HCT116 (cell line): ENCODE measurements at regions of chr2 and their contacts with region 1.

Region 1: DNA sequence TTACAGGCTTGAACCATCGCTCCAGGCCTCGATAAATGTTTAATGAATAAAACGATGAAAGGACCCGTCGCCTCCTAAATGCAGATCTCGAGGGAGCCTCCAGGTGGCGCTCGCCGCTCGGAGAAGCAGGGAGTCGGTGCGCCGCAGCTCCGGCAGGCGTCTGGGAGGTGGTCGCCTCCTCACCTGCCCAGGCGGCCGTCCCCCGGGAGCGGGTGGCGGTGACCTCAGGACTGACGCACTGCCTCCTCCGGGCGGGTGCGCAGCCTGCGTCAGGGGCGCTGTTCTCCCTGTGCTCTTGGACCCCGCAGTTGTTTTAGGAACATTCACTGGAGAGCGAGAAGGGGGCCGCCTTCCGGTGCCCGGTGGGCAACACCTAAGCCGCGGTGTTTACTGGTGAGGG is 38.6 kb upstream of the POLE4 start:
- DNase-seq: peak; percentile 38
- ATAC-seq: peak; percentile 85
- H3K4me3 ChIP-seq: peak overlapping the region in 1 of 2 experiments; percentile 24; a peak in 2 of 4 replicates
- H3K27ac ChIP-seq: no peak overlapping the region
- H3K4me1 ChIP-seq: peaks cover 0 to 4% of the 10 kb centered on the region in 2 experiments; a peak in 1 of 4 replicates
- H3K27me3 ChIP-seq: no peaks in the 10 kb centered on the region
- CTCF ChIP-seq: peak; percentile 67 to 73 (median 72)
- POLR2A ChIP-seq: no peak
- RAD21 ChIP-seq: peak; percentile 88

Region 2: DNA sequence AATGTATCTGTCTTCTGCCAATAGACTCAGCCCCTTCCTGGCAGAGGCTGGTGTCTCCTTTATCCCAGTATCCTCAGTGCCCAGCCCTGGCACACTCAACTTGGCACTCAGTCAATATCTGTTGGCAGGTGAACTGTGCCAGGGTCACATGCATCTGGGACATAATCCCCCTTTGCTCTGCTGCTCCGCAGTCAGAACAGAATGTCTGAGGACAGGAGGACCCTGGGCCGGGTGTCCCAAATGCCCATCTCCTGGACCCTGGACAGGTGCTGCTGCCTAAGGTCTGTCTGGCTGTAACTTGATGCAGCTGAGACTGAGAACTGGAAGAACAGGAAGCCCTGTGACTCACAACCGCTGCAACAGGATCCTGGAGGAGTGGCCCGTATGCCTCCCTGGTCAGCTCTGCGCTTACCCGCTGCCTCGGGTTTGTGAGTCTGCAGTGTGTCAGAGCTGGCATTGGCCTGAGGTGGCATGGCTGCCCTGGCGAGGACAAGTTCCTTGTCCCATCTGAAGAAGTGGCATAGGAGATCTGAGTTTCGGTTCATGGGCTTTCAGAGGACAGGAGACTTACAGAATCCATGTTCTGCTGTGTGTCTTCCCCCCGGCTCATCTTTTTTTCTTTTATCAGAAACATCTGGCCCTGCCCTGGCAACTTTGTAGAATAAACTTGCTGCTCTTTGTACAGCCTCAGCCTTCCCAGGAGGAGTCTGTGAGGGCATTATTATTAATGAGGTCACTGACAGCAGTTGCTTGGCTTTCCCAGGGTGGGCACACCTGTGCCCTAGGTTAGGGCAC is 74.4 kb before region 1 on chr2:
- CTCF ChIA-PET with region 1: no interaction called
- POLR2A ChIA-PET with region 1: no interaction called
- RAD21 ChIA-PET with region 1: no interaction called
- intact Hi-C with region 1: no loop called
- DNase-seq: peak; percentile 91
- ATAC-seq: peak; percentile 99
- H3K4me3 ChIP-seq: peak overlapping the region; percentile 15 to 29; a peak in 3 of 4 replicates
- H3K27ac ChIP-seq: peak overlapping the region; percentile 67
- H3K4me1 ChIP-seq: peaks cover 37 to 64% of the 10 kb centered on the region in 2 experiments
- H3K27me3 ChIP-seq: no peaks in the 10 kb centered on the region
- CTCF ChIP-seq: no peak
- POLR2A ChIP-seq: no peak
- RAD21 ChIP-seq: peak; percentile 23; the same call in 1 of the 2 replicates

Region 3: GRCh38 chr2:74941284-74941683 is 21.5 kb after region 1 on chr2:
- CTCF ChIA-PET with region 1: no interaction called
- POLR2A ChIA-PET with region 1: no interaction called
- RAD21 ChIA-PET with region 1: no interaction called
- intact Hi-C with region 1: no loop called
- DNase-seq: no peak
- ATAC-seq: no peak
- H3K4me3 ChIP-seq: no peak overlapping the region
- H3K27ac ChIP-seq: no peak overlapping the region
- H3K4me1 ChIP-seq: no peaks in the 10 kb centered on the region
- H3K27me3 ChIP-seq: peaks cover 4% of the 10 kb centered on the region; the same call in 1 of the 2 replicates
- CTCF ChIP-seq: no peak
- POLR2A ChIP-seq: no peak
- RAD21 ChIP-seq: no peak

Region 4: DNA sequence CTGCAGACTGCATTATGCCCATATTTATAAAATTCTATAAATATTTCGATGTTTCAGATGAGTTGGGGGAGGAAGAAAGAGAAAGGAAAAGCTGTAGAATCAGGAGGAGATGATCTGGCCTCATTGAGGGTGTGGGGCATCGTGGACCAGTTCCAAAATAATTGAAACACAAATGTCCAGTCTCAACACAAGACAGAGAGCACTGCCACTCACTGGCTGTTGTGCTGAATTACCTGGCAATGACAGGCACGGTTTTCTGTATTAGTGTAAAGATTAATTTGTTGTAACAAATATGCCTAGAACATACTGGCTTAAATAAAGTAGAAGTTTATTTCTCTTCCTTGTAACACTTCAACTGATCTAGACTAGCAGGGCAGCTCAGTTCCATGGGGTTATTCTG is 62.8 kb after region 1 on chr2:
- CTCF ChIA-PET with region 1: no interaction called
- POLR2A ChIA-PET with region 1: no interaction called
- RAD21 ChIA-PET with region 1: no interaction called
- intact Hi-C with region 1: loop called (anchors 5 kb)
- DNase-seq: no peak
- ATAC-seq: peak; percentile 67
- H3K4me3 ChIP-seq: no peak overlapping the region
- H3K27ac ChIP-seq: no peak overlapping the region
- H3K4me1 ChIP-seq: no peaks in the 10 kb centered on the region
- H3K27me3 ChIP-seq: no peaks in the 10 kb centered on the region
- CTCF ChIP-seq: peak; percentile 29 to 54 (median 34); a peak in 3 of 6 replicates
- POLR2A ChIP-seq: no peak
- RAD21 ChIP-seq: peak; percentile 57

Region 5: DNA sequence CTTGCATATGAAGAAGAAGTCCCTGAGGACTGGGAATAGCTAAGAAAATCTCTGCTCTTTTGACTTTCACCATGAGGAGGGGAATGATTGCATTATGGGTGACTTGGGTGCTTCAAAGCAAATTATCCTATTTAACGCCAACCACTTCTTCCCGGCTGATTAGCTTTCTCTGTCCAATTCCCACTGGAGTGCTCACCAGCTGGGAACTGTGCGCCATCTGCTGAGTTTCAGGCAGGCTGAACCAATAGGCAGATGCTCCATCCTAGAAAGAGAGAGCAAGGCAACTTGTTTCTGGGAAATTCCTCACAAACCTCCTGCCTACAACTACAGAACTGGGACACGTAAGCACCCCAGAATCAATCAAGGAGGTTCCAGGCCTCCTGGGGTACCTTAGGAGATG is 88.0 kb after region 1 on chr2:
- CTCF ChIA-PET with region 1: no interaction called
- POLR2A ChIA-PET with region 1: no interaction called
- RAD21 ChIA-PET with region 1: no interaction called
- intact Hi-C with region 1: no loop called
- DNase-seq: no peak
- ATAC-seq: no peak
- H3K4me3 ChIP-seq: no peak overlapping the region
- H3K27ac ChIP-seq: no peak overlapping the region
- H3K4me1 ChIP-seq: no peaks in the 10 kb centered on the region
- H3K27me3 ChIP-seq: no peaks in the 10 kb centered on the region
- CTCF ChIP-seq: no peak
- POLR2A ChIP-seq: no peak
- RAD21 ChIP-seq: no peak

Region 6: DNA sequence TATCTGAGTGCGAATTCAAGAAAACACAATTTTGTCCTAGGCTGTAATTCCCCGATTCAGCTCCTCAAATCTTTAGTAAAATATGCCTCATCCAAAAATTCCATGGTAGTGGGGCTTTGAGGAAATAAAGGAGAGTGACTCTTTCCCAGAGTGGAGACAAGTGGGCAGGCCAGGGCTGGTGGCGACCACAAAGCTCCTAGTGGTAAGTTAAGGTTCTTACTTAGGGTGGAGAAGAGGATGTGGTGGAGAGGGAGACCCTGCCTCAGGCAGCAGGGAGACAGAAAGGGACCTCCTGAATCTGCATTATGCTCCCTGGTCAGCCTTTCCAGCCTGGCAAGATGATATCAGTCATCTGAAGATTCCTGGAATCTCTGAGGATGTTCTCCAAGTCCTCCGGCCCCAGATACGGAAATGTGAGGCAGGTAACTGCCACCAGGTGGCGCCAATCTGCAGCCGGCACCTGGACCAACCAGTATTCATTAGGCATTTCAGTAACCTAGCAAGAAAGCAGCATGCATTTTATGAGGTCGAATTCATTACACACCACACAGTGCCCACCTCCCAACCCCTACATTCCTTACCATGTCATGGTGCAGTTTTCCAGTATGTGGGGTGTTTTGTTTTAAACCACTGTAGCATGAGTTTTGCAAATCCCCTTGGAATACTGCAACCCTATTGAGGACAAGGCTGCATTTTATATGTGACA is 145.0 kb after region 1 on chr2:
- CTCF ChIA-PET with region 1: no interaction called
- POLR2A ChIA-PET with region 1: no interaction called
- RAD21 ChIA-PET with region 1: no interaction called
- intact Hi-C with region 1: loop called (anchors 10 kb)
- DNase-seq: peak; percentile 31
- ATAC-seq: peak; percentile 96
- H3K4me3 ChIP-seq: no peak overlapping the region
- H3K27ac ChIP-seq: no peak overlapping the region
- H3K4me1 ChIP-seq: no peaks in the 10 kb centered on the region
- H3K27me3 ChIP-seq: peaks cover 5% of the 10 kb centered on the region; the same call in 1 of the 2 replicates
- CTCF ChIP-seq: peak; percentile 64 to 99 (median 93); a peak in 5 of 6 replicates
- POLR2A ChIP-seq: no peak
- RAD21 ChIP-seq: peak; percentile 61

Region 7: GRCh38 chr2:75403991-75404428 is 484.2 kb after region 1 on chr2:
- CTCF ChIA-PET with region 1: no interaction called
- POLR2A ChIA-PET with region 1: no interaction called
- RAD21 ChIA-PET with region 1: no interaction called
- intact Hi-C with region 1: loop called (anchors 1 kb)
- DNase-seq: peak; percentile 39
- ATAC-seq: peak; percentile 89
- H3K4me3 ChIP-seq: no peak overlapping the region
- H3K27ac ChIP-seq: no peak overlapping the region
- H3K4me1 ChIP-seq: no peaks in the 10 kb centered on the region
- H3K27me3 ChIP-seq: peaks cover 47% of the 10 kb centered on the region
- CTCF ChIP-seq: peak; percentile 57 to 70 (median 57); a peak in 5 of 6 replicates
- POLR2A ChIP-seq: no peak
- RAD21 ChIP-seq: peak; percentile 72

Region 8: GRCh38 chr2:75608684-75609333 is 689.0 kb after region 1 on chr2:
- CTCF ChIA-PET with region 1: no interaction called
- POLR2A ChIA-PET with region 1: no interaction called
- RAD21 ChIA-PET with region 1: no interaction called
- intact Hi-C with region 1: loop called (anchors 5 kb)
- DNase-seq: peak; percentile 24
- ATAC-seq: peak; percentile 98
- H3K4me3 ChIP-seq: peak overlapping the region; percentile 25 to 26; a peak in 3 of 4 replicates
- H3K27ac ChIP-seq: no peak overlapping the region
- H3K4me1 ChIP-seq: peaks cover 5 to 10% of the 10 kb centered on the region in 2 experiments
- H3K27me3 ChIP-seq: peaks cover 17% of the 10 kb centered on the region; the same call in 1 of the 2 replicates
- CTCF ChIP-seq: peak; percentile 79 to 98 (median 95)
- POLR2A ChIP-seq: no peak
- RAD21 ChIP-seq: peak; percentile 86

Region 9: DNA sequence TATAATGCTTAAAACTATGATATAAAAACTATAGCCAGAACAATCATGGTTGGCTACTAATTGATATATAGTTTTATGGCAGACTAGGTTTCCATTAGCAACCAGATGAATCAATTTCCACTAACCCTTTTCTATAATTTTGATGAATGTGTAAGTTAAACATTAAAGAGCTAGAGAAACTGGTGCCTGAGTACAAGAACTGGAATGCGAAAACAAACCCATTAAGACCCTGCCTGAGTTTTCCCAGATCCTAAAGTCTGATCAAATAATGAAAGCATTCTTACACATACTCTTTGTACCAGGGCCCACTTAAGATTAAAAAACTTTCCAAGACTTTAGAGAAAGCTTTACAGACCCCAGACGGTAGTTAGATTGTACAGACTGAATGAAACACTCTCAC is 748.1 kb after region 1 on chr2:
- CTCF ChIA-PET with region 1: no interaction called
- POLR2A ChIA-PET with region 1: no interaction called
- RAD21 ChIA-PET with region 1: no interaction called
- intact Hi-C with region 1: no loop called
- DNase-seq: no peak
- ATAC-seq: no peak
- H3K4me3 ChIP-seq: no peak overlapping the region
- H3K27ac ChIP-seq: no peak overlapping the region
- H3K4me1 ChIP-seq: no peaks in the 10 kb centered on the region
- H3K27me3 ChIP-seq: no peaks in the 10 kb centered on the region
- CTCF ChIP-seq: no peak
- POLR2A ChIP-seq: no peak
- RAD21 ChIP-seq: no peak